CD8-positive, alpha-beta T cell (primary cell): ENCODE measurements at regions of chr1 and their contacts with region 1.

Region 1: DNA sequence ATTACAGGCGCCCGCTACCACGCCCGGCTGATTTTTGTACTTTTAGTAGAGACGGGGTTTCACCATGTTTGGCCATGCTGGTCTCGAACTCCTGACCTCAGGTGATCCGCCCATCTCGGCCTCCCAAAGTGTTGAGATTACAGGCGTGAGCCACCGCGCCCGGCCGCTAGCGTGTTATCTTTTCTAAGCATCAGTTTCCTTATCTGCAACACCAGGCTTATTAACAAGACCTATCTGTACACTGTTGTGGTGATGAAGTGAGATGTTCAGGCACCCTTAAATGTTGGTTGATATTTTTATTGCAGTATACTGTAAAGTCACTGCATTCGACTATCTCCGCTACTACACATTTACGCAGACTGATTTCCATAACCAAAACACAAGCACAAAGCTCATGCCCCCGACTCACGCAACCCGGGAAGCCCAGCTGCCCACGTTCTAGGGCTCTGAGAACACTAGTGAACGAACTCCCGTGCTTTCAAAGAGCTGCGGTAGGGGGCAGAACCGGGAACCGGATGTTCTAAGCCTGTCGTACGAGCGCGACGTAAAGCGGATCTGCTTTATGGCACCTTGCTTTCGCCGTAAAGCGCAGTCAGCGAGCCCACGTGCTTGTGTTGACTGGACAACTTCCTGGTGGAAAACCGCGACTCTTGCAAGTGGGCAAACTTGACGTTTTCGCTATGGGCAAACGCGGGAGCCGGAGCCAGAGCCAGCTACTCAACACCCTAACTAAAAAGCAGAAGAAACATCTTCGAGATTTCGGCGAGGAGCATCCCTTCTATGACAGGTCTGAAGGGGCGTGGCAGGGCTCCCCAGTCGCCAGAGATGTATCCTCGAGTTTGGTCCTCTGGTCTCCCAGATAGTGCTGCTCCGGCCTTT is at the start of gene UTP25:
- DNase-seq: peak; percentile 87 to 98 (median 92)
- ATAC-seq: peak; percentile 89
- H3K4me3 ChIP-seq: peak within 1 kb of the TSS; percentile 73 to 98
- H3K4me3 Mint-ChIP-seq: peak within 1 kb of the TSS; percentile 94
- H3K27ac ChIP-seq: peak within 1 kb of the TSS; percentile 73 to 89
- H3K27ac Mint-ChIP-seq: peak within 1 kb of the TSS; percentile 89
- H3K4me1 ChIP-seq: peaks cover 20% of the 10 kb centered on the region
- H3K4me1 Mint-ChIP-seq: peaks cover 42% of the 10 kb centered on the region
- H3K27me3 ChIP-seq: peaks cover 0 to 2% of the 10 kb centered on the region in 2 experiments
- H3K27me3 Mint-ChIP-seq: peaks cover 4% of the 10 kb centered on the region
- CTCF ChIP-seq: peak; percentile 78
- total RNA-seq, gene UTP25: 7.5 to 7.9 TPM

Region 2: DNA sequence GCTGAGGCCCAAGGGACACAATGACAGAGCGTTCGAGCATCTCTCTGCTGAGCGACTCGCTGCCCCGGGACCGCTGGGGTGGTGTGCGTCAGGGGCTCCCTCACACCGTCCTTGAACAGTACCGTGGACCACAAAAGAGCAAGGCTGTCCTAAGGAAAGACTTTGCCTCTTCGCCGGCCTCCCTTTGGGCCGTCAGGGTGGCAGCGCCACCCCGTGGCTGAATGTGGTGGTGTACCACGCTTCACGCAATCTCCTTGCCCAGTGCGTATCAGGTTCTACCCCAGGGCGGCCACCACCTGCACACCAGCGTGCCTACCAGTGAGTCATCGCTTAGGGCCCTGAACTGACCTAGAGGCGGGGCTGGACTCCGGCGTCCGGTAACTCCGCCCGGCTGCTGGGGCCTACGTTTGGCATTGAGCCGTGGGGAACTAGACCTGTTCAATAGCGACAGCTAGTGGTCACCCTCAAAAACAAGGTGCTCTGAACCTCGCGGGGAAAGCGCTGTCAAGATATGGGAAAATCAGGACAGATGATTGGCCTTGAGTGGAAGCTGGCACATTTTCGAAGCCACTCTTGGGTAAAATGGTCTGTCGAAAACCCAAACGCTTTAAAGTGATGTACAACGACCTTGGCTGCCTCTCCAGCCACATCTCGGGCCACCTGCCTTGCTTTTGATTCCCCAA is 79.9 kb before region 1 on chr1:
- CTCF ChIA-PET with region 1: interaction called, 24 read pairs
- POLR2A ChIA-PET with region 1: no interaction called
- intact Hi-C with region 1: loop called in 1 of 2 experiments (anchors 1 kb)
- DNase-seq: peak; percentile 65 to 93 (median 83)
- ATAC-seq: peak; percentile 84
- H3K4me3 ChIP-seq: peak overlapping the region; percentile 46 to 56
- H3K4me3 Mint-ChIP-seq: peak overlapping the region; percentile 93
- H3K27ac ChIP-seq: peak overlapping the region; percentile 54 to 67
- H3K27ac Mint-ChIP-seq: peak overlapping the region; percentile 97
- H3K4me1 ChIP-seq: peaks cover 46% of the 10 kb centered on the region
- H3K4me1 Mint-ChIP-seq: peaks cover 52% of the 10 kb centered on the region
- H3K27me3 ChIP-seq: no peaks in the 10 kb centered on the region
- H3K27me3 Mint-ChIP-seq: no peaks in the 10 kb centered on the region
- CTCF ChIP-seq: peak; percentile 97

Region 3: GRCh38 chr1:209761011-209761635 is 66.5 kb before region 1 on chr1:
- CTCF ChIA-PET with region 1: interaction called, 14 read pairs
- POLR2A ChIA-PET with region 1: interaction called, 3 read pairs
- intact Hi-C with region 1: loop called (anchors 5 kb)
- DNase-seq: no peak
- ATAC-seq: no peak
- H3K4me3 ChIP-seq: peak overlapping the region in 1 of 2 experiments; percentile 10
- H3K4me3 Mint-ChIP-seq: peak overlapping the region; percentile 46
- H3K27ac ChIP-seq: peak overlapping the region; percentile 31 to 79
- H3K27ac Mint-ChIP-seq: peak overlapping the region; percentile 86
- H3K4me1 ChIP-seq: peaks cover 74% of the 10 kb centered on the region
- H3K4me1 Mint-ChIP-seq: peaks cover 84% of the 10 kb centered on the region
- H3K27me3 ChIP-seq: no peaks in the 10 kb centered on the region
- H3K27me3 Mint-ChIP-seq: no peaks in the 10 kb centered on the region
- CTCF ChIP-seq: no peak

Region 4: GRCh38 chr1:209774592-209774991 is 53.0 kb before region 1 on chr1:
- CTCF ChIA-PET with region 1: interaction called, 10 read pairs
- POLR2A ChIA-PET with region 1: interaction called, 16 read pairs
- intact Hi-C with region 1: loop called in 1 of 2 experiments (anchors 5 kb)
- DNase-seq: peak in 1 of 9 experiments; percentile 7
- ATAC-seq: no peak
- H3K4me3 ChIP-seq: no peak overlapping the region
- H3K4me3 Mint-ChIP-seq: peak overlapping the region; percentile 13
- H3K27ac ChIP-seq: peak overlapping the region in 1 of 2 experiments; percentile 49
- H3K27ac Mint-ChIP-seq: no peak overlapping the region
- H3K4me1 ChIP-seq: peaks cover 49% of the 10 kb centered on the region
- H3K4me1 Mint-ChIP-seq: peaks cover 46% of the 10 kb centered on the region
- H3K27me3 ChIP-seq: no peaks in the 10 kb centered on the region
- H3K27me3 Mint-ChIP-seq: no peaks in the 10 kb centered on the region
- CTCF ChIP-seq: no peak

Region 5: GRCh38 chr1:209790286-209791193 is 37.1 kb before region 1 on chr1:
- CTCF ChIA-PET with region 1: interaction called, 20 read pairs
- POLR2A ChIA-PET with region 1: no interaction called
- intact Hi-C with region 1: no loop called
- DNase-seq: no peak
- ATAC-seq: no peak
- H3K4me3 ChIP-seq: no peak overlapping the region
- H3K4me3 Mint-ChIP-seq: no peak overlapping the region
- H3K27ac ChIP-seq: no peak overlapping the region
- H3K27ac Mint-ChIP-seq: no peak overlapping the region
- H3K4me1 ChIP-seq: no peaks in the 10 kb centered on the region
- H3K4me1 Mint-ChIP-seq: peaks cover under 1% of the 10 kb centered on the region
- H3K27me3 ChIP-seq: no peaks in the 10 kb centered on the region
- H3K27me3 Mint-ChIP-seq: peaks cover 9% of the 10 kb centered on the region
- CTCF ChIP-seq: no peak

Region 6: GRCh38 chr1:209815931-209816341 is 11.7 kb before region 1 on chr1:
- CTCF ChIA-PET with region 1: interaction called, 27 read pairs
- POLR2A ChIA-PET with region 1: no interaction called
- intact Hi-C with region 1: no loop called
- DNase-seq: no peak
- ATAC-seq: no peak
- H3K4me3 ChIP-seq: no peak overlapping the region
- H3K4me3 Mint-ChIP-seq: no peak overlapping the region
- H3K27ac ChIP-seq: no peak overlapping the region
- H3K27ac Mint-ChIP-seq: no peak overlapping the region
- H3K4me1 ChIP-seq: no peaks in the 10 kb centered on the region
- H3K4me1 Mint-ChIP-seq: no peaks in the 10 kb centered on the region
- H3K27me3 ChIP-seq: no peaks in the 10 kb centered on the region
- H3K27me3 Mint-ChIP-seq: peaks cover 3% of the 10 kb centered on the region
- CTCF ChIP-seq: no peak

Region 7: GRCh38 chr1:209849388-209849787 is 21.8 kb after region 1 on chr1:
- CTCF ChIA-PET with region 1: no interaction called
- POLR2A ChIA-PET with region 1: no interaction called
- intact Hi-C with region 1: no loop called
- DNase-seq: no peak
- ATAC-seq: no peak
- H3K4me3 ChIP-seq: no peak overlapping the region
- H3K4me3 Mint-ChIP-seq: no peak overlapping the region
- H3K27ac ChIP-seq: no peak overlapping the region
- H3K27ac Mint-ChIP-seq: peak overlapping the region; percentile 9
- H3K4me1 ChIP-seq: no peaks in the 10 kb centered on the region
- H3K4me1 Mint-ChIP-seq: peaks cover 6% of the 10 kb centered on the region
- H3K27me3 ChIP-seq: no peaks in the 10 kb centered on the region
- H3K27me3 Mint-ChIP-seq: no peaks in the 10 kb centered on the region
- CTCF ChIP-seq: no peak